Dorsolateral prefrontal cortex (tissue), 120 donors: ENCODE measurements at regions of chr2 and their contacts with region 1.

Region 1: DNA sequence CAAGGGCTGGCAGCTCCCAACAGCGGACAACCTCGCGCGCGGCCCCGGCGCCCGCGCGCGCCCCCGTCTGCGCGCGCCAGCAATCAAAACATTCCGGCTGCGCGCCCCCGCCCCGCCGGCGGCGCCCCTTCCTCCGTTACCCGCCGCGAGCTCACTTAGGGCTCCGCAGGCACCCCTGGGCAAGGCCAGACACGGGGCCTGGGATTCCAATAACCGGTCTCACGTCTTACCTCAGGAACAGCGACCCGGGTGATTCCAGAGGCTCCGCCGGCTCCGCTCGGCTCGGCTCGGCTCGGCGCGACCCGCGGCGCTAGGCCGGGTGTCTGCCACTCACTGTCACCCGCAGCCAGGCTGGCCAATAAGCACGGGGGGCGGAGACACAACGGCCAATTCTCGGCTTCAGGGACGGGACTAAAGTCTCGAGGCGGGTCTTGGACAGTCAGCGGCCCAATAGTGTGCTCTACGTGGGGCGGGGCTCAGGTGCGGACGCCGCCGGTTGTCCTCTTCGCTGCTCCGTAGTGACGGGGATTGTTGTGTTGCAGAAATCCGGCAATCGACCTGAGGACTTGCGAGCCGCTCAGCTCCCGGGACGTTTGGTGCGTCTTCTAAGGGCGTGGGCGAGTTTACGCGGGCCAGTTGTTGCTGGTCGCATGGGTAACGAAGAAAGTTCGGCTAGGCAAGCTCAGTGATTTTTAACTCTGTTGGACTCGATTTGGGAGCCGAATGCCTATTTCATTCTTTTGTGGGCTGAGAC is at the starts of genes ANKZF1 and ATG9A:
- DNase-seq: peak; percentile 98 to 100 (median 99)
- H3K4me3 ChIP-seq: peak within 1 kb of the TSS; percentile 58 to 98 (median 91)
- H3K27ac ChIP-seq: peak within 1 kb of the TSS; percentile 77 to 99 (median 95)
- H3K27me3 ChIP-seq: no peaks in the 10 kb centered on the region
- CTCF ChIP-seq: peak in 29 of 56 donors; percentile 3 to 56 (median 22)
- total RNA-seq, gene ANKZF1: 34.9 to 110 (median 67.6) TPM
- total RNA-seq, gene ATG9A: 65.7 to 122 (median 90.2) TPM

Region 2: DNA sequence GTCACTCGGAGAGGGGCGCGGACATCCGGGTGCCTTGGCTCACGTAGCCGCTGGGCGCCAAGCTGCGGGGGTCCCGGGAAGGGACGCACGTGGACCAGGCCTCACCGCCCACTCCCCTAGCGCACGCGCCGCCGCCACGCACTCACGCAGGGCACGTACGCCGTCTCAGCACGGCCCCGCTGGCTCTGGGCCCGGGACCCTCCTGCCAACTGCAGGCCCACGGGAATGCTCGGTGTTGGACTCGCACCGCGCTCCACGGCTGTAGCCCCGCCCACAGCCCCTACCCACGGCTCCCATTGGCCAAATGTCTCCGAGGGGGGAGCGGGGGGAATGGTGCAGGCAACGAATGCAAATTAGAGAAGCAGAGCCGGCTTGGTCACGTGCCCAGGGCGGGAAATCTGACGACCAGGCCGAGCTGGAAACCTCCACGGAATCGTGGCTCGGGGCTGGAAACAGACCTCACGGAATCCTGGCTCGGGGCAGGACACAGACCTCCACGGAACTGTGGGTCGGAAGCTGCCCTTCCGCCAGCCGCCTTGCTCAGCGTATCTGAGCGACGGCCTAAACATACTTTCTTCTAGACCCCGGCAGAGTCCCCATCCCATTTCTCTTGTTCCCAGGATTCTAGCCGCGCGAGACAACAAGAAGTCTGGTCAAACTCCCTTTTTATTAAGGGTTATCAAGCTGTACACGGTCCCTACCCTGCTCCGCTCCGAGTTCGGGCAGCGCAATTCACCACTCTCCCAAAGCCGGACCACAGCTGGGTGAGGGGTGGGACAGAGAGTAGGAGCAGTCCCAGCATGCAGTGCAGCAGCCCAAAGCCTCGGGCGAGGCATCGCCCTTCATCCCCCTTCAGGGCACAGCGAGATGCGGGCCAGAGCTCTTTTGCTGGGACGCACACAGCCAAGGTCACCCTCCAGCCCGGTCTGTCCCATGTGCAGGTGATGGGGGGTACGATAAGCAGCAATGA is 10.5 kb before region 1 on chr2 and contains the start of gene ABCB6:
- intact Hi-C with region 1: loop called in 1 of 2 experiments (anchors 1 kb)
- DNase-seq: peak; percentile 94 to 99 (median 98)
- H3K4me3 ChIP-seq: peak within 1 kb of the TSS; percentile 40 to 95 (median 71)
- H3K27ac ChIP-seq: peak within 1 kb of the TSS; percentile 49 to 96 (median 91)
- H3K27me3 ChIP-seq: no peaks in the 10 kb centered on the region
- CTCF ChIP-seq: peak in 13 of 56 donors; percentile 2 to 55 (median 19)
- total RNA-seq, gene ABCB6: 25.8 to 68.6 (median 40.0) TPM